Left ventricle myocardium superior (tissue), 1 donor: ENCODE measurements at regions of chr1 and their contacts with region 1.

Region 1: GRCh38 chr1:202998836-202999750 is 8.1 kb upstream of the TMEM183A start:
- DNase-seq: no peak
- ATAC-seq: no peak

Region 2: DNA sequence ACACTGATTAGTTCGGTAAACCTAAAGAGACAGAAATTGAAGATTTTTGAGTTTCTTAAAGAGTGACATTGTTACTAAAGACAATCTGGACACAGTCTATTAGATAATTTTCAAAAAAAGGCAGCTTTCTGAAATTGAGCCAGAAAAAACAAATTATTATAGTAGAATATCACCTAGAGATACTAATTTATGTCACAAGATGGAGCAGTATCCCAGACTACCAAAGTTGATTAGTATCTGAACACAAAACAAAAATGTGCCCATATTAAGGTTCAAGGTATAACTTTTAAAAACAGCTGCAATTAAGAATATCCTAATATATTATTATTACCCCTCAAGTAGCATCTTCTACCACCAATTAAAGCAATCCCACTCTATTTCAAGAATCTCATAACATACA is 248.3 kb before region 1 on chr1:
- intact Hi-C with region 1: loop called (anchors 10 kb)
- DNase-seq: no peak
- ATAC-seq: no peak

Region 3: DNA sequence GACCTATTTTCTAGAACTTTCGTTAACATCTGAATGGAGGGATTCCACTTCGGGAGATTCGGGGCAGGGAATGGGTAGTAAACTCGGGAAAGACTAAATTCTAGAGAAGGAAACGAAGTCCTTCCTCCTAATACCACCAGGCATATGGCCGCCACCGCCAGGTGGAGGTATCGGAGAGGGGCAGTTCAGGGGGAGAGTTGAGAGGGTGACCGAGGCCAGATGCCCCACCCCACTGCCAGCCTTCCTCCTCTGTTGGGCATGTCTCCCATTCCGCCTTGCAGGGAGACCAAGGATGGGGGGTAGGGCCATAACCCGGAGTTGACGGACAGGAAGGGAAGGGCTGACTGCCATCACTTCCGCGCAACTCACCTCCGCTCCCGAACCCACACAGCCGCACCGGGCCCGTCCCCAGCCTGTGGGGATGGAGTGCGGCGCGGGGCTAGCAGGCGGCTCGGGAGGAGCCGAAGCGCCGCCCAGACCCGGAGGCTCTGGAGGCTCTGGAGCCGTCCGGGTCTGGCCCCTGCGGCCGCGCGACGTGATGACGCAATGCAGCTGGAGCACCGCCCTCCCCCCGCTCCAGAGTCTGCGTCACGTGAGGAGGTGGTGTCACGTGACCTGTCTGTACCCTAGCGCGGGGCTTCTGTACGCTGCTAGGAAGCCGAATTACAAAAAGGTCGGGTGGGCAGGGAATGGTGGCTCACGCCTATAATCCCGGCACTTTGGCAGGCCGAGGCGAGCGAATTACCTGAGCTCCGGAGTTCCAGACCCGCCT is 72.2 kb before region 1 on chr1 and contains the start of gene KLHL12:
- intact Hi-C with region 1: loop called (anchors 5 kb)
- DNase-seq: peak; percentile 98
- ATAC-seq: peak; percentile 99
- total RNA-seq, gene KLHL12: 18.8 TPM

Region 4: DNA sequence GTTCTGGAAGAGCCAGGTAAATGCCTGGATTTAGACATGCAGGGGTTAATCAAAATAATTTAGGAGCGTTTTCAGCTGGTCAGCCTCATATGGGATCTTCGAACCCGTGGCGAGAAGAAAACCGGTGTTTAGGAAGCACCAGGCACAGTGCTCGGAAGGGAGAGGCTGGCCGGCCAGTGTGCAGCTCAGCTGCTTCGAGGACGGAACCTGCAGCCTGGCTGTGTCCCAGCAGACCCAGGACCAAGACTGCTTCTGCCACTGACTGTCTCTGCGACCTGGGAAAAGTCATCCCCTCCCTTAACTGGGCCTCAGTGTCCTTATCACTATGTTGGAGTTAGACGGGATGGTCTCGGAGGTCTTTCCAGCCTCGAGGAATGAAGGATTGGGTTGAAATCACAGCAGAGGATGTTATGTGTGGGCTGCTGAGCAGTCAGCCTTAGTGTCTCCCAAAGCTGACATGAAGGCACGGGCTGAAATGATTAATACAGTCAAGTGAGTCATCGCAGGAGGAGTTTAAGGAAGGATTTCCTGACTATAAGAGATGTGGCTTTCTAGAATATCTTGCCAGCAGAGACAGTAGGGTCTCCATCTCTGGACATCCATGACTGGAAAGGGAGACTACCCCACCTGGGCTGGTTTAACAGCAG is 48.0 kb after region 1 on chr1:
- intact Hi-C with region 1: no loop called
- DNase-seq: no peak
- ATAC-seq: peak; percentile 43

Region 5: DNA sequence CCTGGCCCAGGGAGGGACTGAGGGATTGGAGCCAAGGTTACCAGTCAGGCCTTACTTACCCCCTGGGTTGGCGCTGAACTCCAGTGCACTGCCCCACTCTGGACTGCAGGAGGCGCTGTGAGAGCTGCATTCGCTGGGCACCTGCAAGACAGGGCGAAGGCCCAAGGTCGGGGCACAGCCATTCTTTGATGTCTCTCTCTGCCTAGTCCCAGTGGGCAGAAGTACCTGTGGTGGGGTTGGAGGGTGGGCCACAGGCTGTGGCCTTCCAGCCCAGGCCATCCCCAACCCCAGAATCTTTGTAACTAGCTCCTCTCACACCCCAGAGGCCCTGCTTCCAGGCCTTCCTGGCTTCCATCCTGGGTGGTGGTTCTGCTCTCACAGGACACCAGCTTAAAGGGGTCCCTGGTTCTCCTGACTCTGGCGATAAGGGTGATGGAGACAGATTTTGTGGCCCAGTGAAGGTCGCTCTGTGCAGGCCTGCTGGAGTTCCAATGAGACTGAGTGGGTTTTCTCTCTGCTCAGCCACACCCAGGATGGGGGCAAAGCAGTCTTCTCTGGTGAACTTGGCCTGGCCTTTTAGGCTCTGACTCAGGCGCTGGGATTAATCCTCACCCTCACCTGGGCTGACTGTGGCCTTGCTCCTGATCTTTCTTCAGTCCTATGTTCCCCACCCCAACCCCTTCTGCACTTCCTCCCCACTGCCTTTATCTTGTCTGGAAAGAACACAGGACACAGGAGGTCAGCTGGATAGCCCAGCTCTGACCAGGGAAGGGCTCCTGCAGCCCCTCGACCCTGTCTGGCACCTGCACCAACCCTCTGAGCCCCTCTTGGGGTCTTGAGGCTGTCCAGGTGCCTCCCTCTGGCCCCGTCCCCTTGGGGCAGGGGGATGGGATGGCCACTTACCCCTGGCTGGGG is 85.8 kb after region 1 on chr1:
- intact Hi-C with region 1: no loop called
- DNase-seq: no peak
- ATAC-seq: no peak

Region 6: DNA sequence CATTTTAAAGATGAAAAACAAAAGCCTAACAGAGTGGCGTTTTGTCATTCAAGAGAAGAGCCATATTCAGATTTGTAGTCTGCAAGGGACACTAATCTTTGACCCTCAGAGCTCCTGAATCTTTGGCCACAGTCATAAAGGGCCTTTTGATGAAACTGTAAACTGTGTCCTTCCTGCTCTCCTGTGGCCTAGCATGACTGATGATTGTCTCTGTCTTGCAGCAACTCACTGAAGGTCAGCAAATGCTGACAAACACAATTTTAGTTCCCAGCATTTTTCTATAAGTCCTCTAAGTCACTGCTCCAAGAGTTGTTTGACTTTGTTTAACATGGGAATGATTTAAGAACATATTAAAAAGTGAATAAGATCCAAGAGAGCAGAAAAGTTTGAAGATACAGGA is 421.2 kb after region 1 on chr1:
- intact Hi-C with region 1: no loop called
- DNase-seq: no peak
- ATAC-seq: no peak